T-cell (primary cell): ENCODE measurements at regions of chr18 and their contacts with region 1.

Region 1: DNA sequence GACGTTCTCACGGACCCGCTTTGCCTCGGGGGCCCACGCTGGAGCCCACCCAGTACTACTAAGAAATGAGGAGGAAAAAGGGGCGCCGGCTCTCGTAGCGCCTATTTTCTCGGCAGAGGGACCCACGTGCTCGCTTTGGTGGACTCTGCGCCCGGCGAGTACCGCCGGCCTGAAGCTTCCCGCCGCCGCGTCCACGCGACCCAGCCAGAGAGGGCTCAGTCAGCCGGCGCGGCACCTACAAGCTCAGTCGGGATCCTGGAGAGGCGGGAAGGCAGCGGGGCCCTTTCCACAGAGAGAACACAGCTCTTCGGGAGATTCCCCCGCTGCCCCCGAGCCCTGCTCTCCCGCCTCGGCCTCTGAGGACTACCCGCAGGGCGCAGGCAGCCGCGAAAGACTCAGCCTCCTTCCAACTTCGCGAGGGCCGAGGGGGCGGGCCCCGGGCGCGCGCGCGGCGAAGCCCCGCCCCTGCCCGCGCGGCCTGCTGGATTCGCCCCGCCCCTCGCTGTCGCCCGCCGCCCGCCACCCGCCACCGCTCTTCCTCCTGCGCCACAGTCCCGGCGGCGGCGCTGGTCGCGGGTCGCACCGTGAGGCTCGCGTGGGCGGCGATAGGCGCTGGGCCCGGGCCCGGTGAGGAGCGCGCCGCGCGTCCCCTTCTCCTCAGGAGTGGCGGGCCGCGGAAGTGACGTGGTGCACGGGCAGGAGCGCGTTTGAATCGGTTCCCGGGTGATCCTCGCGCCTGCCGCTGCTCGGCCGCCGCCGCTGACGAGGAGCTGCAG is at the start of gene SMCHD1:
- DNase-seq: peak; percentile 72 to 95 (median 83)
- ATAC-seq: peak; percentile 76 to 86 (median 79)
- H3K4me3 ChIP-seq: peak within 1 kb of the TSS; percentile 94 to 97
- H3K4me3 Mint-ChIP-seq: peak within 1 kb of the TSS; percentile 95 to 97 (median 96)
- H3K27ac ChIP-seq: peak within 1 kb of the TSS; percentile 100
- H3K27ac Mint-ChIP-seq: peak within 1 kb of the TSS; percentile 93 to 97
- H3K4me1 ChIP-seq: peaks cover 16 to 31% of the 10 kb centered on the region in 2 experiments
- H3K4me1 Mint-ChIP-seq: peaks cover 37 to 48% (median 42%) of the 10 kb centered on the region in 3 donors
- H3K27me3 ChIP-seq: no peaks in the 10 kb centered on the region
- H3K27me3 Mint-ChIP-seq: no peaks in the 10 kb centered on the region
- total RNA-seq, gene SMCHD1: 179 to 423 (median 206) TPM

Region 2: GRCh38 chr18:2606335-2606734 is 49.0 kb before region 1 on chr18:
- CTCF ChIA-PET with region 1: interaction called, 3 to 14 read pairs
- POLR2A ChIA-PET with region 1: interaction called, 5 to 44 read pairs
- DNase-seq: peak in 1 of 35 experiments; percentile 55
- ATAC-seq: peak in 2 of 4 experiments; percentile 33 to 79
- H3K4me3 ChIP-seq: no peak overlapping the region
- H3K4me3 Mint-ChIP-seq: peak overlapping the region; percentile 26 to 59 (median 32)
- H3K27ac ChIP-seq: peak overlapping the region; percentile 91
- H3K27ac Mint-ChIP-seq: peak overlapping the region; percentile 83 to 92
- H3K4me1 ChIP-seq: peaks cover 10 to 34% of the 10 kb centered on the region in 2 experiments
- H3K4me1 Mint-ChIP-seq: peaks cover 55 to 62% (median 56%) of the 10 kb centered on the region in 3 donors
- H3K27me3 ChIP-seq: no peaks in the 10 kb centered on the region
- H3K27me3 Mint-ChIP-seq: no peaks in the 10 kb centered on the region

Region 3: DNA sequence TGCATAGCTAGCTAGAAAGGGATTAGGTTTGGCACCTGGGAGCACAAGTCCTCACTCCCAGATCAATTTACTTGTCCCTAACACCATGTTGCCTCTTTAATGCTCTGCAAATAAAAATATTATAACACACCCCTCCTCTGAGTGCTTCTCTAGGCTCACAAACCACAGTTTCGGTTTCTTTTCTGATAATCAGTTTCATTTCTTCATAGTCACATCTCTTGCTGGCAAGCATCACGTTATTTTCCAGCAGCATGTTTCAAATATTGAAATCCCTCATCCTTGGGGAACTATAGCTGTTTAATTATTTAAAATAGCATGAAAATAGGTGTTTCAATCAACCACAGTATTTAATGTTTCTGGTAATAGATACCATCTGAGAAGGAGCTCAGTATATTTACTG is 13.7 kb before region 1 on chr18:
- CTCF ChIA-PET with region 1: interaction called, 6 to 19 read pairs
- POLR2A ChIA-PET with region 1: interaction called, 20 to 120 read pairs
- DNase-seq: peak in 1 of 35 experiments; percentile 76
- ATAC-seq: peak in 3 of 4 experiments; percentile 34 to 49 (median 44)
- H3K4me3 ChIP-seq: peak overlapping the region in 1 of 2 donors; percentile 25
- H3K4me3 Mint-ChIP-seq: peak overlapping the region; percentile 61 to 84 (median 71)
- H3K27ac ChIP-seq: peak overlapping the region; percentile 100
- H3K27ac Mint-ChIP-seq: no peak overlapping the region
- H3K4me1 ChIP-seq: peaks cover 61 to 65% of the 10 kb centered on the region in 2 experiments
- H3K4me1 Mint-ChIP-seq: peaks cover 52 to 54% (median 53%) of the 10 kb centered on the region in 3 donors
- H3K27me3 ChIP-seq: no peaks in the 10 kb centered on the region
- H3K27me3 Mint-ChIP-seq: no peaks in the 10 kb centered on the region

Region 4: DNA sequence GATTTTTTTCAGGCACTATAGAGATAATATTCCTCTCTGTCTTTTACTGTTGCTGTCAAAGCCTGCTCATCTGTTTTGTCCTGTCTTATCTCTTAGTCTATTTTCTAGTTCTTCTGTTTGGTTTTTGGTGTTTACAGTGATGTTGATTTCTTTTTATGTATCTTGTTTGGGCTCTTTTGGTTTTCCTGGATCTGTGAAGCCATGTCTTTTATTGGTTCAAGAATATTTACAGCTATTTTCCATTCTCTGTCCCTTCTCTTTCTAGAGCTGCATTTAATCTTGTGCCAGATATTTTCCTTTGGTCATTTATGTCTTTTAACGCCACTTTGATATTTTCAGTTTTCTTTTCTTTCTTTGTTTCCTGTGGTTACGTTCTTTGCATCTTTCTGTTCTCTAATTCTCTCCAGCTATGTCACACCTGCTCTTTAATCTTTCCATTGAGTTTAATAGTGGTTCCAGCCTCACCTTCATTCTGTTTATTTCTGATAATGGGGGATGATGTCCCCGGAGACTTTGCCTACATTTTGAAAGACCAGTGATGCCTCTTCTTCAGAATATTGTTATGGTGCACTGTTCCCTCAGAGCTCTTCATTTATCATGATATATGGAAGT is 32.1 kb after region 1 on chr18:
- CTCF ChIA-PET with region 1: interaction called, 4 read pairs
- POLR2A ChIA-PET with region 1: interaction called in 1 of 2 experiments, 16 read pairs
- DNase-seq: no peak
- ATAC-seq: no peak
- H3K4me3 ChIP-seq: no peak overlapping the region
- H3K4me3 Mint-ChIP-seq: peak overlapping the region in 2 of 3 donors; percentile 35 to 38
- H3K27ac ChIP-seq: peak overlapping the region; percentile 11
- H3K27ac Mint-ChIP-seq: peak overlapping the region; percentile 68 to 85
- H3K4me1 ChIP-seq: peaks cover 3 to 5% of the 10 kb centered on the region in 2 experiments
- H3K4me1 Mint-ChIP-seq: peaks cover 66 to 72% (median 66%) of the 10 kb centered on the region in 3 donors
- H3K27me3 ChIP-seq: no peaks in the 10 kb centered on the region
- H3K27me3 Mint-ChIP-seq: no peaks in the 10 kb centered on the region

Region 5: DNA sequence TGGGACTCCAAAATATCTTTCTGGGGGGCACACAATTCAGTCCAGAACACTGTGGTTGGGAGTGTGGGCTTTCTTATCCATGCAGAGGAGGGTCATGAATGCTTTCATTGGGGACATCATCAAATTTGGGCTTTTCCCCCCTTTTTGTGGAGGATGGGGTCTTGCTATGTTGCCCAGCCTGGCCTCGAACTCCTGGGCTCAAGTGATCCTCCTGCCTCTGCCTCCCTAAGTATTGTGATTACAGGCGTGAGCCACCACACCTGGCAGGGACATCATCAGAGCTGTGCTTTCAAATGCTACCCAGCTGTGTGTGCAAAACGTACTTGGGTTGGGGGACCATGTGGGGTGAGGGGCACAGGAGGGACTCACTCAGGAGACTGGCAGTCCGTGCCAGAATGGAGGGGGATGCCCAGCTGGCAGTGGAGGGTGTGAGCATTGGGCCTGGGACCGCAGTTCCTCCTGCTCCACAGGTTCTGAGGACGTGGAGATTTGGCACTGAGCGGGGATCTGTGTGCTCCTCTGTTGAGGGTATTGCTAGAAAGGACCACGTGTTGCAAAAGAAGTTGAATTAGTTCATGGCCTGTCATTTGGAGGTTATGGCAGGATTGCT is 215.8 kb after region 1 on chr18:
- CTCF ChIA-PET with region 1: no interaction called
- POLR2A ChIA-PET with region 1: no interaction called
- DNase-seq: no peak
- ATAC-seq: no peak
- H3K4me3 ChIP-seq: no peak overlapping the region
- H3K4me3 Mint-ChIP-seq: no peak overlapping the region
- H3K27ac ChIP-seq: no peak overlapping the region
- H3K27ac Mint-ChIP-seq: peak overlapping the region in 1 of 2 donors; percentile 19
- H3K4me1 ChIP-seq: no peaks in the 10 kb centered on the region
- H3K4me1 Mint-ChIP-seq: peaks cover 0 to 20% (median 4%) of the 10 kb centered on the region in 3 donors
- H3K27me3 ChIP-seq: peaks cover 0 to 5% of the 10 kb centered on the region in 2 experiments
- H3K27me3 Mint-ChIP-seq: peaks cover 0 to 2% of the 10 kb centered on the region in 2 donors

Region 6: DNA sequence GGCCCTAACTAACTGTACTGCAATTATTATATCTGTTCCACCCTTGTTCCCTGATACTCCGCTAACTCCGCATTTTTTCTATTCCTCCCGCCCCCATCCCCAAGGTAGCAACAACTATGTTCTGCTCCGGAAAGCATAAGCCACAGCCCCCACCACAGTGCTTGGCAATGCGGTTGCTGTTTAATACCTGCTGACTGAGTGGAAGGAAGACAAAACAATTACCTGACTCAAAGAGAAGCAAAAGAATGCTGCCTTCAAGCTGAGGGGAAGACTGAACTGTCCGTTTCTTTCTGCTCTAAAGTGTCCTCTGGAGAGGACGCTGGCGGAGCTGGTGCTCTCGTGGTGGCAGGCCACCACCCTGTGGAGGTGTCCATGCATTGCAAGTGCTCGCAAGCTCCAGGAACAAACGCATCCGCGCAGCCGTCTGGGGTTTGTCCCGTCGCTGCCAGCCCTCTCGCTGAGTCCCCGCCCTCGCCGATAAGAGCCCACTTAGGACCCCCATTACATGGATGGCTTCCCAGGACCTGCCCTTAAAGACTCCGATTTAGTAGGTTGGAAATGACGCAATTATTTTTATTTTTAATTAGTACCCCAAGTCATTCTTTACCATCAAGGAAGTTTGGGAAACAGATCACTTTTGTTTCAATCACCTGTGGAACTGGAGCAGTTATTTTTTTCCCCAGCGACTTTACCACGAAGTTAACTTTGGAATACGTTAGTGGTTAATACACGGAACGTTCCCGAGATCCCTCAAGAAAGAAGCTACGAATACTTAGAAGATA is 590.7 kb after region 1 on chr18:
- CTCF ChIA-PET with region 1: no interaction called
- POLR2A ChIA-PET with region 1: interaction called, 4 to 11 read pairs
- DNase-seq: peak; percentile 49 to 85 (median 69)
- ATAC-seq: peak; percentile 43 to 59 (median 52)
- H3K4me3 ChIP-seq: peak overlapping the region; percentile 90
- H3K4me3 Mint-ChIP-seq: peak overlapping the region; percentile 96 to 98 (median 97)
- H3K27ac ChIP-seq: peak overlapping the region; percentile 82
- H3K27ac Mint-ChIP-seq: peak overlapping the region; percentile 89 to 93
- H3K4me1 ChIP-seq: peaks cover 27 to 32% of the 10 kb centered on the region in 2 experiments
- H3K4me1 Mint-ChIP-seq: peaks cover 38 to 45% (median 40%) of the 10 kb centered on the region in 3 donors
- H3K27me3 ChIP-seq: no peaks in the 10 kb centered on the region
- H3K27me3 Mint-ChIP-seq: no peaks in the 10 kb centered on the region